GM12878 (cell line): ENCODE measurements at regions of chr15 and their contacts with region 1.

Region 1: GRCh38 chr15:29904757-29905417 is 82.6 kb upstream of the TJP1 start:
- DNase-seq: no peak
- ATAC-seq: no peak
- H3K4me3 ChIP-seq: no peak overlapping the region
- H3K27ac ChIP-seq: no peak overlapping the region
- H3K4me1 ChIP-seq: no peaks in the 10 kb centered on the region
- H3K27me3 ChIP-seq: no peaks in the 10 kb centered on the region
- CTCF ChIP-seq: no peak
- EP300 ChIP-seq: no peak
- POLR2A ChIP-seq: no peak
- RAD21 ChIP-seq: no peak

Region 2: GRCh38 chr15:29859973-29860715 is 44.7 kb before region 1 on chr15:
- CTCF ChIA-PET with region 1: no interaction called
- POLR2A ChIA-PET with region 1: no interaction called
- RAD21 ChIA-PET with region 1: no interaction called
- SMC1A ChIA-PET with region 1: no interaction called
- in situ Hi-C with region 1: no loop called
- intact Hi-C with region 1: loop called (anchors 10 kb)
- DNase-seq: no peak
- ATAC-seq: no peak
- H3K4me3 ChIP-seq: no peak overlapping the region
- H3K27ac ChIP-seq: no peak overlapping the region
- H3K4me1 ChIP-seq: no peaks in the 10 kb centered on the region
- H3K27me3 ChIP-seq: no peaks in the 10 kb centered on the region
- CTCF ChIP-seq: no peak
- EP300 ChIP-seq: no peak
- POLR2A ChIP-seq: no peak
- RAD21 ChIP-seq: no peak

Region 3: GRCh38 chr15:29925227-29926082 is 20.6 kb after region 1 on chr15:
- CTCF ChIA-PET with region 1: no interaction called
- POLR2A ChIA-PET with region 1: no interaction called
- RAD21 ChIA-PET with region 1: no interaction called
- SMC1A ChIA-PET with region 1: no interaction called
- in situ Hi-C with region 1: no loop called
- intact Hi-C with region 1: no loop called
- DNase-seq: no peak
- ATAC-seq: peak; percentile 77
- H3K4me3 ChIP-seq: no peak overlapping the region
- H3K27ac ChIP-seq: no peak overlapping the region
- H3K4me1 ChIP-seq: no peaks in the 10 kb centered on the region
- H3K27me3 ChIP-seq: no peaks in the 10 kb centered on the region; a peak in 1 of 4 replicates
- CTCF ChIP-seq: peak; percentile 35 to 40 (median 38)
- EP300 ChIP-seq: no peak
- POLR2A ChIP-seq: no peak
- RAD21 ChIP-seq: no peak; the same call in 1 of the 2 replicates